Activated CD8-positive, alpha-beta T cell treated with anti-CD3 and anti-CD28 coated beads, Interleukin-2, amount 10 ng/mL, durations not matched to agents 7 days and 5 days (primary cell): ENCODE measurements at regions of chr10 and their contacts with region 1.

Region 1: GRCh38 chr10:63866075-63866746 is 345.0 kb downstream of the REEP3 start:
- DNase-seq: peak; percentile 53
- ATAC-seq: peak; percentile 85
- H3K4me3 Mint-ChIP-seq: no peak overlapping the region
- H3K27ac Mint-ChIP-seq: no peak overlapping the region
- H3K4me1 Mint-ChIP-seq: peaks cover 10% of the 10 kb centered on the region
- H3K27me3 Mint-ChIP-seq: peaks cover 7% of the 10 kb centered on the region

Region 2: GRCh38 chr10:63542835-63543575 is 323.2 kb before region 1 on chr10:
- CTCF ChIA-PET with region 1: no interaction called
- POLR2A ChIA-PET with region 1: no interaction called
- DNase-seq: no peak
- ATAC-seq: no peak
- H3K4me3 Mint-ChIP-seq: no peak overlapping the region
- H3K27ac Mint-ChIP-seq: no peak overlapping the region
- H3K4me1 Mint-ChIP-seq: peaks cover 6% of the 10 kb centered on the region
- H3K27me3 Mint-ChIP-seq: no peaks in the 10 kb centered on the region

Region 3: DNA sequence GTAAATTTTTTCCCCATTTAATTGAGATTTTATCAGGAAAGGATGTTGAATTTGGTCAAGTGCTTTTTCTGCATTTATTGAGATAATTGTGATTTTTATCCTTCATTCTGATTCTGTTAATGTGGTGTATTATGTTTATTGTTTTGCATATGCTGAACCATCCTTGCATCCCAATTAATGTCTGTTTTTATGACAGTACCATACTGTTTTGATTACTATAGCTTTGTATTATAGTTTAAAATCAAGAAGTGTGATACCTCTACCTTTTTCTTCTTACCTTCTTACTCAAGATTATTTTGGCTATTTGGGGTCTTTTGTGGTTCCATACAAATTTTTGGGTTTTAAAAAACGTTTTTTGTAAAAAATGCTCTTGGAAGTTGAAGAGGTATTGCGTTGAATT is 12.2 kb after region 1 on chr10:
- CTCF ChIA-PET with region 1: interaction called, 12 read pairs
- POLR2A ChIA-PET with region 1: no interaction called
- DNase-seq: no peak
- ATAC-seq: no peak
- H3K4me3 Mint-ChIP-seq: no peak overlapping the region
- H3K27ac Mint-ChIP-seq: no peak overlapping the region
- H3K4me1 Mint-ChIP-seq: no peaks in the 10 kb centered on the region
- H3K27me3 Mint-ChIP-seq: no peaks in the 10 kb centered on the region

Region 4: DNA sequence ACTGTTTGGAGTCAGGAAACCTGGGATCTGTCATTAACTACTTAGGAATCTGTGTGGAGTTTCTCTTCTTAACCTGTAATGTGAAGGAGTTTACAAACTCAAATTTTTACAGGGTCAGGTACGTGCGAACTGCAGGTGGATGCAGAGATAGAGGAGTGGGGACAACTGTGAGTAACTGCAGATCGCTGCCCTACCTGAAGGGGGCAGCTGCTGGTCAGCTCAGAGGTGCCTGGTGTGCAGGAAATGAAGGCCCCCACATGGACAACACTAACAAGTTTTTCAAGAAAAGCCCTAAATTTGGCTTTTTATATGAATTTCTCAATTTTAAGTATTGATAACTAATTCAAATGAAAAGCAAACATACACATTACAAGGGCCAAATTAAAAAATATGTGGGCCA is 35.0 kb after region 1 on chr10:
- CTCF ChIA-PET with region 1: interaction called, 10 read pairs
- POLR2A ChIA-PET with region 1: no interaction called
- DNase-seq: no peak
- ATAC-seq: no peak
- H3K4me3 Mint-ChIP-seq: no peak overlapping the region
- H3K27ac Mint-ChIP-seq: no peak overlapping the region
- H3K4me1 Mint-ChIP-seq: no peaks in the 10 kb centered on the region
- H3K27me3 Mint-ChIP-seq: peaks cover 2% of the 10 kb centered on the region

Region 5: GRCh38 chr10:63976538-63976937 is 110.3 kb after region 1 on chr10:
- CTCF ChIA-PET with region 1: interaction called, 34 read pairs
- POLR2A ChIA-PET with region 1: no interaction called
- DNase-seq: peak; percentile 50
- ATAC-seq: peak; percentile 82
- H3K4me3 Mint-ChIP-seq: no peak overlapping the region
- H3K27ac Mint-ChIP-seq: no peak overlapping the region
- H3K4me1 Mint-ChIP-seq: no peaks in the 10 kb centered on the region
- H3K27me3 Mint-ChIP-seq: no peaks in the 10 kb centered on the region

Region 6: GRCh38 chr10:64486149-64486548 is 619.9 kb after region 1 on chr10:
- CTCF ChIA-PET with region 1: no interaction called
- POLR2A ChIA-PET with region 1: no interaction called
- DNase-seq: no peak
- ATAC-seq: no peak
- H3K4me3 Mint-ChIP-seq: no peak overlapping the region
- H3K27ac Mint-ChIP-seq: no peak overlapping the region
- H3K4me1 Mint-ChIP-seq: no peaks in the 10 kb centered on the region
- H3K27me3 Mint-ChIP-seq: no peaks in the 10 kb centered on the region